Calu3 (cell line): ENCODE measurements at regions of chr3 and their contacts with region 1.

Region 1: GRCh38 chr3:187745201-187746058 is at the start of gene BCL6:
- DNase-seq: peak; percentile 93
- H3K4me3 Mint-ChIP-seq: peak within 1 kb of the TSS; percentile 83
- H3K27ac Mint-ChIP-seq: peak within 1 kb of the TSS; percentile 89
- H3K4me1 Mint-ChIP-seq: peaks cover 54% of the 10 kb centered on the region
- H3K27me3 Mint-ChIP-seq: no peaks in the 10 kb centered on the region
- CTCF ChIP-seq: no peak
- total RNA-seq, gene BCL6: 28.3 and 35.1 TPM in 2 replicates

Region 2: DNA sequence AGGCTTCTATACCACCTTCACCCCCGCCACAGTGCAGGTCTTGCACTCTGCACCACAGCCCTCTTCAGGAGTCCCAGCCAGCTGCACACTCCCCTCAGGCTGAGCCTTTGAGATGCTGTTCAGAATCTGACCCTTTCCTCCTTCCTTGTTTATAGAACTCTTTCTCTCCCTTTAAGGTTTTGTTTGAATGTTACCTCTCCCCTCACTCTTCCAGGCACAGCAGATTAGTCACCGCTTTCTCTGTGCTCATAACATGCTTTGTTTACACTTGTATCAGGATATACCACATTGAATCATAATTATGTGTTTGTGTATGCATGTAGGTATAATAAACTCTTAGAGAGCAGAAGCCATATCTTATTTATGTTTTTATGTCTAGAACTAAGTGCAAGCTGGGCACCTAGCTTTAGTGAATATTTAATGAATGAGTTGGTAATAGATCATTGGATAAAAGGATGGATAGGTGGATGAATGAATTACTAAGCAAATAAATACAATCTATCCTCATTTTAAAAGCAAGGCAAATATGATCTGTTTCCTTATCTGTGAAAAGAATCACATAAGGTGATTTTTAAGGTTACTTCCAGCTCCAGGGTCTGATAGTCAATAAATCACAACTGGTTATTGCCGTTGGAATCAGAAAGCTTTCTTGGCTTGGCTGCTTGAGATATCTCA is 168.3 kb after region 1 on chr3:
- CTCF ChIA-PET with region 1: interaction called, 4 read pairs
- intact Hi-C with region 1: loop called (anchors 5 kb)
- DNase-seq: peak; percentile 55
- H3K4me3 Mint-ChIP-seq: peak overlapping the region; percentile 1
- H3K27ac Mint-ChIP-seq: peak overlapping the region; percentile 3
- H3K4me1 Mint-ChIP-seq: peaks cover 30% of the 10 kb centered on the region
- H3K27me3 Mint-ChIP-seq: no peaks in the 10 kb centered on the region
- CTCF ChIP-seq: no peak

Region 3: DNA sequence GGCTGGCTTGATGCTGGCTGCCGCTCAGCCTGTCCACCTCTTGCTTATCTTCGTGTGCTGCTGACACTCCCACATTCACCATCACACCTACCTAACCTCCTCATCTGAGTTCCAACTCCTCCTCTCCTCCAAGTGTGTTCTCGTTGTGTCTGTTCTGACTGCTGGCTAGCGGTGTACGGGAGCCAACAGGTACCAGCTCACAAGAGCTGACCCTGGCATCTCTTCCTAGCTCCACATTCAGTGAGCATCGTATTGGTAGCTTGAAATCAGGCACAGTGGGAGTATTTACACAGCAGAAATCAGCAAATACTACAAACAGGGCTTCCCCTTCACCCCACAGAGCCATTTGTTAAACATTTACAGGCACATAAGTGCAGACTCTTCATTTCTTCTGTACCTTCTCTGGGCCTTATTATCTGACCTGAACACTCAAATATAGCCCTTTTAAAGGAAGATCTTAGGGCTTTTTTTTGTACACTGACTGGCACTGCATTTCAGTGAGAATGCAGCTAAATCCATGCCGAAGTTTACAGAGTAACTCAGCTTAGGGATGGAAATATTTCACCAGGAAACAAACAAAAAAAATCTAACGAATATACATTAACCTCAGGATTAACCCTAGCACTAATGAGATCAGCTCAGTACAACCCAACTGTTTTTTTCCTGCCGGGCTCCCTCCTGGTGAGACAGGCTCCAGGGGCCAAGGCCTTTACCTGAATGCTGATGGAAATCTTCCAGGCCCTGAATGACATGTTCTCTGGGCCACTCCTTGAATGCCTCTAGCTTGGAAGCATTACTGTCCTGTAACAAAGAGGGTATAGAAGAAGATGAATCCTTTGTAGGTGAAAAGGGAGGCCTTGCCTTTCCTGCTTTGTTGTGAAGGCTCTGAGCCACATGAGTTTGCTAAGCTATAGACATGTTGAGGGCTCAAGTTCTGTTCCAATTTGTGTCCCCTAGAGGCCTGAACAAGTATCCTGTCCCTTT is 258.1 kb after region 1 on chr3:
- CTCF ChIA-PET with region 1: interaction called, 5 read pairs
- intact Hi-C with region 1: loop called (anchors 1 kb)
- DNase-seq: peak; percentile 62
- H3K4me3 Mint-ChIP-seq: peak overlapping the region; percentile 51
- H3K27ac Mint-ChIP-seq: peak overlapping the region; percentile 78
- H3K4me1 Mint-ChIP-seq: peaks cover 51% of the 10 kb centered on the region
- H3K27me3 Mint-ChIP-seq: no peaks in the 10 kb centered on the region
- CTCF ChIP-seq: no peak

Region 4: GRCh38 chr3:188123170-188123905 is 377.9 kb after region 1 on chr3:
- CTCF ChIA-PET with region 1: interaction called, 6 read pairs
- intact Hi-C with region 1: loop called (anchors 10 kb)
- DNase-seq: peak; percentile 25
- H3K4me3 Mint-ChIP-seq: peak overlapping the region; percentile 36
- H3K27ac Mint-ChIP-seq: peak overlapping the region; percentile 69
- H3K4me1 Mint-ChIP-seq: peaks cover 39% of the 10 kb centered on the region
- H3K27me3 Mint-ChIP-seq: no peaks in the 10 kb centered on the region
- CTCF ChIP-seq: no peak

Region 5: GRCh38 chr3:188439080-188439479 is 693.6 kb after region 1 on chr3:
- CTCF ChIA-PET with region 1: interaction called, 3 read pairs
- intact Hi-C with region 1: loop called (anchors 10 kb)
- DNase-seq: peak; percentile 35
- H3K4me3 Mint-ChIP-seq: peak overlapping the region; percentile 35
- H3K27ac Mint-ChIP-seq: peak overlapping the region; percentile 73
- H3K4me1 Mint-ChIP-seq: peaks cover 58% of the 10 kb centered on the region
- H3K27me3 Mint-ChIP-seq: no peaks in the 10 kb centered on the region
- CTCF ChIP-seq: no peak